Cardiac septum (tissue), 1 donor: ENCODE measurements at regions of chr7 and their contacts with region 1.

Region 1: GRCh38 chr7:74505471-74506324 is 52.0 kb downstream of the GTF2IRD1 start:
- DNase-seq: no peak

Region 2: GRCh38 chr7:74429153-74429747 is 76.4 kb before region 1 on chr7:
- intact Hi-C with region 1: no loop called
- DNase-seq: no peak

Region 3: GRCh38 chr7:74527842-74528241 is 22.1 kb after region 1 on chr7:
- intact Hi-C with region 1: loop called (anchors 1 kb)
- DNase-seq: no peak

Region 4: GRCh38 chr7:74598558-74598957 is 92.9 kb after region 1 on chr7:
- intact Hi-C with region 1: no loop called
- DNase-seq: no peak

Region 5: DNA sequence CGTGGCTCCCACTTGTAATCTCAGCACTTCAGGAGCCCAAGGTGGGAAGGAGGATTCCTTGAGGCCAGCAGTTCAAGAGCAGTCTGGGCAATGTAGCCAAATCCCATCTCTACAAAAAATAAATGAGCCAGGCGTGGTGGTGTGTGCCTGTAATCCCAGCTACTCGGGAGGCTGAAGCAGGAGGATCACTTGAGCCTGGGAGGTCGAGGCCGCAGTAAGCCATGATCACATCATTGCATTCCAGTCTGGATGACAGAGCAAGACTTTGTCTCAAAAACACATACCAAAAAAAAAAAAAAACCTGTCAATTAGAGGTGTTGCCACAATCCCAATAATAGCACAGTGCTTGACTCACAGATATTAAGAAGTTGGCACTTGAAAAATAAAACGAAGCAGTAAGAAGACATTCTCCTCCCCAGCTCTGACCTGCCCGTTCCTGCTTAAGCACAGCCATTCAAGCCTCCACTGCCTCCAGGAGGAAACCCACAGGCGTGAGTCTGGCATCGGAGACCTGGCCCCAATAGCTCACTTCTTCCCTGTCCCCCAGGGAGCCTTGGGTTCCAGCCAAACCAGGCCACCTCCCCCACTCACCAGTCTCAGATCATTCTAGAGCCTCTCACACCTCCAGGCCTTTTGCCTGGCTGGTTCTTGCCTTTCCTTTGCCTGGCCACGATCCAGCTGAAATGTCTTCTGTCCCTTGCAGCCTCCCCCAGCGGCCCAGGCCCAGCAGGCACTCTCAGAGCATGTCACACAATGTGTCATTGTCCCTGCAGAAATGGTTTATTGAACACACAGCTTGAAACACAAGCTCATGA is 106.5 kb after region 1 on chr7:
- intact Hi-C with region 1: no loop called
- DNase-seq: no peak